Breast epithelium (tissue), 4 donors: ENCODE measurements at regions of chr10 and their contacts with region 1.

Region 1: GRCh38 chr10:6379015-6379776 is 176.5 kb downstream of the PFKFB3 start:
- DNase-seq: no peak
- H3K4me3 ChIP-seq: no peak overlapping the region
- H3K27ac ChIP-seq: no peak overlapping the region
- H3K4me1 ChIP-seq: no peaks in the 10 kb centered on the region
- H3K27me3 ChIP-seq: no peaks in the 10 kb centered on the region
- CTCF ChIP-seq: no peak
- POLR2A ChIP-seq: no peak

Region 2: DNA sequence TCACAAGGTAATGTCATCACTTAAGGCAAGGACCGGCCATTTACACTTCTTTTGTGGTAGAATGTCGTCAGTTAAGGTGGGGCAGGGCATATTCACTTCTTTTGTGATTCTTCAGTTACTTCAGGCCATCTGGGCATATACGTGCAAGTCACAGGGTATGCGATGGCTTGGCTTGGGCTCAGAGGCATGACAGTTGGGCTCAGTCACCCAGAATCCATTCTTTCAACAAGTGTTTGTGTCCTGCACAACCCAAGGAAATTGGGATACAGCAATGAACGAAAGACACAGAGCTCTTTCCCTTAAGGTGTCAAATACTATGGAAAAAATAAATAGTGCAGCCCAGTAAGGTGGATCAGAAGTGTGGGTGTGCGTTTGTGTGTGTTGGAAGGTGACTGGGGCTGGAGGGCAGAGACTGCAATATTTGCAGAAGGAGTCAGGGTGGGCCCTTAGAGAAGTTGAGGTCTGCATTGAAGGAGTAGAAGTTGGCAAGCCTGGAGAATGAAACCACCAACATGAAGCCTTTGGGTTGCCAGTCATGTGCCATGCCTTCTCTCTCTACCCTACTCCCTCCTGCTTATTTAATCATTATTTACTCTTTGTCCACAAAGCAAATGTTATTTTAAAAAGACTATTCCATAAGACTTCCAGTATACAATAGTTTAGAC is 423.7 kb after region 1 on chr10:
- intact Hi-C with region 1: loop called (anchors 10 kb)
- DNase-seq: no peak
- H3K4me3 ChIP-seq: no peak overlapping the region
- H3K27ac ChIP-seq: no peak overlapping the region
- H3K4me1 ChIP-seq: no peaks in the 10 kb centered on the region
- H3K27me3 ChIP-seq: no peaks in the 10 kb centered on the region
- CTCF ChIP-seq: no peak
- POLR2A ChIP-seq: no peak